HepG2 (cell line): ENCODE measurements at regions of chr7 and their contacts with region 1.

Region 1: DNA sequence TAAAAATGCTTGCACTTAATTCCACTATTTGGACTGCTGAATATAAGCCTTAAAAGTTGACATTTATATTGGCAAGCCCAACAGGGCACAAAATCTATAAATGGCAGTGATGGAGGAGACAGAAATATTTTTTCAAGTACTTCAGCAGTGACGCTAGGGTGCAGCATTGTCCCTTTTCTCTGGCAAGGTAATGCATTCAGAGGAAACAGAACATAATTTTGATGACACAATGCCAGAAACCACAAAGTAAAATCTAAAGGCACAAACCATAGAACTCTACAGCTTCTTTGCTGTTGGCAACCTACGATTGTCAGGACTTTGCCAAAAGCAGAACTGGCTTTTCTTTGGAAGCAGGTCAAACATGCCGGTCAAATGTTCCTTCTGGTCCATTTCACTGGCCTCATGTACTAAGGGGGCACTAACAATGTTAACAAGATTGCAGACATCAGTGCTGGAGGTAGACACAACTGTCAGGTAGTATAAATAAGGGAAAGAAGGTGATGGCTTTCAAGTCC is 30.9 kb upstream of the FAM133B start:
- DNase-seq: peak; percentile 41
- ATAC-seq: peak; percentile 85
- H3K4me3 ChIP-seq: no peak overlapping the region
- H3K27ac ChIP-seq: peak overlapping the region; percentile 4
- H3K4me1 ChIP-seq: no peaks in the 10 kb centered on the region
- H3K27me3 ChIP-seq: no peaks in the 10 kb centered on the region
- CTCF ChIP-seq: peak; percentile 66
- EP300 ChIP-seq: no peak
- POLR2A ChIP-seq: no peak
- RAD21 ChIP-seq: peak; percentile 53

Region 2: GRCh38 chr7:92827464-92828120 is 206.5 kb after region 1 on chr7:
- CTCF ChIA-PET with region 1: interaction called, 12 read pairs
- POLR2A ChIA-PET with region 1: no interaction called
- in situ Hi-C with region 1: loop called (anchors 5 kb)
- intact Hi-C with region 1: loop called (anchors 2 kb)
- DNase-seq: no peak
- ATAC-seq: 0 out of 3 replicates have a peak, but pooled peaks have one; percentile 23
- H3K4me3 ChIP-seq: no peak overlapping the region
- H3K27ac ChIP-seq: no peak overlapping the region
- H3K4me1 ChIP-seq: peaks cover 92% of the 10 kb centered on the region
- H3K27me3 ChIP-seq: no peaks in the 10 kb centered on the region; a peak in 1 of 5 replicates
- CTCF ChIP-seq: no peak
- EP300 ChIP-seq: no peak
- POLR2A ChIP-seq: no peak; a peak in 1 of 4 replicates
- RAD21 ChIP-seq: no peak